ENCODE measurements at regions of chr17 and their contacts with region 1.

Region 1: GRCh38 chr17:41801374-41802271 is 10.1 kb downstream of the P3H4 start:
- DNase-seq: no peak
- H3K4me3 ChIP-seq: no peak overlapping the region; the same call in 1 of the 2 replicates
- CTCF ChIP-seq: peak; percentile 97

Region 2: DNA sequence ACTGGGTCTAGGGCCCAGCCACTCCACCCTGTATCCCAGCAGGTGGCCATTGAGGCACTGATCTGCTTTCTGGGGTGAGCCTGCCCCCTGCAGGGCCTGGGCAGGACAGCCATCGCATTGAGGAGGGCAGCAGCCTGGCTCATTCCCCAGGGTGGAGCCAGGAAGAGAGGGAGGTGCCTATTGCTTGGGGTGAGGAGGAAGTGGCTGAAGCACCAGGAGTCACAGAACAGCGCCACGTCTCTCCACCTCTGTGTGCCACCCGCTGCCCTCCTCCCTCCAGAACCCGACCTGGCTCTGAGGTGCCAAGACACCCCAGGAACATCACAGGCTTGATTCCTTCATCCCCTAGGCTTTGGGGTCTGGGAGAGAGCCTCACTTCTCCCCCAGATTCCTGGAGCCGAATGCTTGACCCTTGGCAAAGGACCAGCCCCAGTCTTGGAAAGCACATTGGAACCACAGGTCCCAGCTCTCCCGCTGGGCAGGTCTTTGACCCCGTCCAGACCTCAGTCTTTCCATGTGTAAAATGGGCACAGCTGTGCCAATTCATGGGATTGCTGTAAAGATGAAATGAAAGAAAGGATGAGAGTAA is 304.7 kb before region 1 on chr17:
- CTCF ChIA-PET with region 1: no interaction called
- POLR2A ChIA-PET with region 1: no interaction called
- DNase-seq: peak; percentile 37
- H3K4me3 ChIP-seq: no peak overlapping the region
- CTCF ChIP-seq: peak; percentile 96

Region 3: DNA sequence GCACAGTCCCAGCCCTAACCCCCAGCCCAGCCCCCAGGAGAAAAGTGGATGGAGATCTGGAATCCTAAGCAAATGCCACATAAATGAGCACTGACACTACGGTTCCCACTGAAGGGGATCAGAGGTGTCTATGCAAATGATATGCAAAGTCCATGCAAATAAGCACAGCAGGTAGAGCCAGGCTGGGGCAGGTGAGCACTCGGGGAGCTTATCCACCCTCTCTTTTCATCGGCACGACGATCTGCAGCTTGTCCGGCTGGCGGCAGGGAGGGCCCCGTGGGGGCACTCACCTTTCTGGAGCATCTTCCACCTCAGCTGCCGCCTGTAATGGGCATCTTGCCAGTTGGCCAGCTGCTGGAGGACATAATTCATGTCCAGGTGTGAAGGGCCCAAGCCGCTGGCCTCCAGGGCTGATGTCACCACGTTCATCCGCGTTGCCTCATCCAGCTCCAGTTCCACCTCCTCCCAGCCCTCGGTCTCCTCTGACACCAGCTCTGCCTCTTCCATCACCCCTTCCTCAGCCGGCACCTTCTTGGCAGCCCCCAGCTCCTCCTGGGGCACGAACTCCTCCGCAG is 77.1 kb before region 1 on chr17:
- CTCF ChIA-PET with region 1: interaction called, 25 read pairs
- POLR2A ChIA-PET with region 1: no interaction called
- DNase-seq: no peak
- H3K4me3 ChIP-seq: no peak overlapping the region
- CTCF ChIP-seq: no peak

Region 4: GRCh38 chr17:41750862-41751261 is 50.8 kb before region 1 on chr17:
- CTCF ChIA-PET with region 1: interaction called, 107 read pairs
- POLR2A ChIA-PET with region 1: no interaction called
- DNase-seq: no peak
- H3K4me3 ChIP-seq: no peak overlapping the region
- CTCF ChIP-seq: no peak

Region 5: DNA sequence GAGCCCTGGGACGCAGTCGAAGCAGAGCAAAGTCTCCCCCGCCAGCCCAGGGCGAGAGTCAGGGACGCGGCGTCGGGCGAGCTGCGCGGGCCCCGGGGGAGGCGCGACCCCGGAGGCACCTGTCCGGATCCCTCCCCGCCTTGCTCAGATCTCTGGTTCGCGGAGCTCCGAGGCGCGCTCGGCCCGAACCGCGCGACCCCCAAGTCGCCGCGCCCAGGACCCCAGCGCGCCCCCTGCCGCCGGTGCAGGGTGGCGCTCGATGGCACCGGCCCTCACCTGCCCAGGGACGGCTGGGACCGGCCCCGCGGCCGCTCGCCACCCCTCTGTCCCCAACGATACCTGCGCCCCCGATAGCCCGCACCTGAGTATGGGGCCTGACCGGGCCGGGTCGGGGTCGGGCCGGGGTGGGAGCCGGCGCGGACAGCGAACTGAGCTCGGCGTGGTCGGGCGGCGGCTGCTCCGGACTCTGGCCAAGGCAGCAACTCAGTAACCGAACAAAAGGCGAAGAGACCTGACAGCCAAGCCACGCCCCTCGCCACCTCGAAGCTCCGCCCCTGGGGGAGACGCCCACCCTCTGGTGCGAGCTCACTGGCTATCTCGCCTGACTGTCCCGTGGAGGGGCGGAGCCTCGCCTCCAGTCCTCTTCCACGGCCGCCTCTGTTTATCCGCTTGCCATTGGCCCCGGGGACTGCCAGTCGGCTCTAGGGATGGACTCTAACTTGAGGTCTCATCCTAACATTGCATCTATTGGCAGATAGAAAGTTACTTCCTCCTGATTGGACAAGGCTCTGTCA is 15.2 kb before region 1 on chr17 and contains the start of gene JUP:
- CTCF ChIA-PET with region 1: interaction called, 52 read pairs
- POLR2A ChIA-PET with region 1: no interaction called
- DNase-seq: peak; percentile 89
- H3K4me3 ChIP-seq: peak within 1 kb of the TSS; percentile 61
- CTCF ChIP-seq: peak; percentile 37

Region 6: GRCh38 chr17:41959336-41960095 is 157.9 kb after region 1 on chr17:
- CTCF ChIA-PET with region 1: interaction called, 11 read pairs
- POLR2A ChIA-PET with region 1: no interaction called
- DNase-seq: no peak
- H3K4me3 ChIP-seq: no peak overlapping the region
- CTCF ChIP-seq: peak; percentile 45

Measured in AG04449 (cell line).